Activated B cell treated with CpG ODN at 0.5 μM for 24 hours (primary cell): ENCODE measurements at regions of chr10 and their contacts with region 1.

Region 1: DNA sequence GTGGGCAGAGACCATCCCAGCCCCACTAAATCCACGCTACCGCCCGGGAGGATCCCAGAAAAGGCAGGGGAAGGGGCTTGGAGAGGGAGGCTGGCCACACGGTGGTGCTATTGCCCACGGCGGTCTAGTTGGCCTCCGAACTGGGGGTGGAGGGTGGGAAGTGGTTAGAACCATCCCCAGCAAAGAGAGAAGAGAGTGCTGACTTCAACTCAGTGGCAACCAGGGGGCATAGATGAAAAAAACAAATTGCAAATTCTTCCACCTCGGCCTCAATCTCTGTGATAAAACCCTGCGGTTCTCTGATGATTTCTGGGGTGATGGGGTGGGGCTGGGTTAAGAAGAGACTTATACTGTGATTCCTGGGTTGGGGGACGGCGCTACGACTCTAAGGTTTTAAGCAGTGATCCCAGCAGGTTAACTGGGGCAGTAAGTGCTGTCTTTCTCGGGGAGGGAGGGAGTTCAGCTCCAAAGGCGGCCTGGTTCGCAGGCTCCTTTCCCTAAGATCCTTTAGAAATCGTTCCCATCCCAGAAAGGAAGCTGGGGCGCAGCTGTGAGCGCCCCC is 154.5 kb upstream of the LYZL2 start:
- DNase-seq: peak; percentile 61
- ATAC-seq: peak; percentile 86
- H3K4me3 Mint-ChIP-seq: peak overlapping the region; percentile 81
- H3K27ac Mint-ChIP-seq: no peak overlapping the region
- H3K4me1 Mint-ChIP-seq: peaks cover 11% of the 10 kb centered on the region
- H3K27me3 Mint-ChIP-seq: peaks cover 14% of the 10 kb centered on the region
- CTCF ChIP-seq: peak; percentile 60

Region 2: GRCh38 chr10:30687698-30688219 is 96.3 kb before region 1 on chr10:
- CTCF ChIA-PET with region 1: interaction called, 9 read pairs
- POLR2A ChIA-PET with region 1: no interaction called
- intact Hi-C with region 1: loop called (anchors 1 kb)
- DNase-seq: peak; percentile 63
- ATAC-seq: peak; percentile 71
- H3K4me3 Mint-ChIP-seq: no peak overlapping the region
- H3K27ac Mint-ChIP-seq: no peak overlapping the region
- H3K4me1 Mint-ChIP-seq: peaks cover 5% of the 10 kb centered on the region
- H3K27me3 Mint-ChIP-seq: peaks cover 21% of the 10 kb centered on the region
- CTCF ChIP-seq: peak; percentile 93

Region 3: DNA sequence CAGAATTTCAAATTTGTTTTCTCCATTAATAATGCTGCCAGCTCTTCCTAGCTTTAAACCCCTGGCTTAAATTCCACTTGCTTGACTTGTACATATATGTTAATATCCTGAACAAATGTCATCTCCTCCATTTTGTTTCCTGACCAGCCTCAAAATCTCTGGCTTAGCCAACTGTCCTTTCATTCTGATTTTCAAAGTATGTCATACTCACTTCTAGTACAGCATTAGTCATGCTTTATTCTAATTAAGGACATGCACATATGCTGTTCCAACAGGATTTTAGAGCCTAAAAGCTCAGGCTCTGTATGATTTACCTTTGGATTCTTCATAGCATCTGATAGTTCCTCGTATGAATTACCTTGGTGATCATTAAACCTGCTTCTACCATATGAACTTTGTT is 89.4 kb after region 1 on chr10:
- CTCF ChIA-PET with region 1: no interaction called
- POLR2A ChIA-PET with region 1: no interaction called
- intact Hi-C with region 1: no loop called
- DNase-seq: no peak
- ATAC-seq: no peak
- H3K4me3 Mint-ChIP-seq: no peak overlapping the region
- H3K27ac Mint-ChIP-seq: no peak overlapping the region
- H3K4me1 Mint-ChIP-seq: no peaks in the 10 kb centered on the region
- H3K27me3 Mint-ChIP-seq: no peaks in the 10 kb centered on the region
- CTCF ChIP-seq: no peak

Region 4: GRCh38 chr10:31083765-31084184 is 299.8 kb after region 1 on chr10:
- CTCF ChIA-PET with region 1: interaction called, 3 read pairs
- POLR2A ChIA-PET with region 1: no interaction called
- intact Hi-C with region 1: loop called (anchors 2 kb)
- DNase-seq: no peak
- ATAC-seq: peak; percentile 64
- H3K4me3 Mint-ChIP-seq: no peak overlapping the region
- H3K27ac Mint-ChIP-seq: no peak overlapping the region
- H3K4me1 Mint-ChIP-seq: no peaks in the 10 kb centered on the region
- H3K27me3 Mint-ChIP-seq: peaks cover 5% of the 10 kb centered on the region
- CTCF ChIP-seq: no peak

Region 5: DNA sequence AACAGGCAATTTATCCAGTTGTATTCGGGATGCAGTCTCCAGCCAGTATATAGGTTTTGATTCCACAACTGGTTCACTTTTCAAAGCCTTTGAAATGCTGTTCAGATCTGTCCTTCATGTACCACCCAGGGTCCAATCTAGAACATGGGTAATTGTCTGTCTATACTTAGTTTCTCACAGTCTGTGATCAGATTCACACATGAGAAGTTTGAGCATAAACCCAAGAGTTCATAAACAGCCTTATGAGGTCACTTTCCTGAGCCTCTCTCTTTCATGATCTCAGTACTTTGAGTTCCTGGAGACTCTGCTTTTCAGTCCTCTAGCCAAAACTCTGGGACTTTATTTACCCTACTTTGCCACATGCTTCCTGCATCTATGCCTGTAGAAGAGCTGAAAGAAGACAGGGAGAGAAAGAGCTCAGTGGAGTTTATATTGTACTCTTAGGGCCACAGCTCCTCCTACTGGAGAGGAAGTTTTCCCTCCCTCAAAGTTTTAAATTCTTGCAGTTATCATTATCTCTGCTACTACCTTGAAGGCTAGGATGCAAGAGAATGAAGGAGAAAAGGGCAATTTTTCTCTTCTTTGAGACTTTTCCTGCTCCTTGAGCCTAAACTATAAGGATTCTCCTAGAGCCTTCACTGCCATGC is 707.0 kb after region 1 on chr10:
- CTCF ChIA-PET with region 1: interaction called, 34 read pairs
- POLR2A ChIA-PET with region 1: interaction called, 7 read pairs
- intact Hi-C with region 1: loop called (anchors 1 kb)
- DNase-seq: no peak
- ATAC-seq: peak; percentile 45
- H3K4me3 Mint-ChIP-seq: no peak overlapping the region
- H3K27ac Mint-ChIP-seq: no peak overlapping the region
- H3K4me1 Mint-ChIP-seq: no peaks in the 10 kb centered on the region
- H3K27me3 Mint-ChIP-seq: no peaks in the 10 kb centered on the region
- CTCF ChIP-seq: no peak

Region 6: DNA sequence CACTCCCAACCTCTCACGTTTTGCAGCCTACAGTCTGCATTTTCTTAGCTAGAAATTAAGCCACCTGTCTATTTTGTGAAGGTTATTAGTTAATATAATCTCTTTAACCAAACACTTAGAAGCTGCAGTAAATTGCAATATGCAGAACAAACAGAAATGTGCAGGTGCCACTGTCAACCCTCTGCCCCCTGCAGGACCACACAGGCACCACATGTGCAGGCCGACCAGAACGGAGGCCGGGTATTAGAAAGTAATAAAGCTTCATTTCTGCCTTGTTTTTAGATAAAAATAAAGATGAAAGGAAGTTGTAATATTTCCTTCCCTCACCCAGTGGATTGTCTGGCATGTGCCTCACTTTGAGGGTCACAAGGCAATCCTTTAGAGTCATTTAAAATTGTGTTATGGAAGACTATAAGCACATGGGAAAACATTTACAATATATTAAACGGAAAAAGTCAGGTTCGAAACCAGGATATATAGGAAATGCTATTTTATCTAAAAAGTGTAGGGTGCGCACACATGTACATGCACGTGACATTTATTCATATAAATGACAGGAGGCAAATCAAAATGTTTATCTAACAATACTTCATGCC is 986.4 kb after region 1 on chr10:
- CTCF ChIA-PET with region 1: interaction called, 80 read pairs
- POLR2A ChIA-PET with region 1: interaction called, 3 read pairs
- intact Hi-C with region 1: loop called (anchors 1 kb)
- DNase-seq: no peak
- ATAC-seq: peak; percentile 96
- H3K4me3 Mint-ChIP-seq: no peak overlapping the region
- H3K27ac Mint-ChIP-seq: no peak overlapping the region
- H3K4me1 Mint-ChIP-seq: no peaks in the 10 kb centered on the region
- H3K27me3 Mint-ChIP-seq: no peaks in the 10 kb centered on the region
- CTCF ChIP-seq: peak; percentile 53

Region 7: DNA sequence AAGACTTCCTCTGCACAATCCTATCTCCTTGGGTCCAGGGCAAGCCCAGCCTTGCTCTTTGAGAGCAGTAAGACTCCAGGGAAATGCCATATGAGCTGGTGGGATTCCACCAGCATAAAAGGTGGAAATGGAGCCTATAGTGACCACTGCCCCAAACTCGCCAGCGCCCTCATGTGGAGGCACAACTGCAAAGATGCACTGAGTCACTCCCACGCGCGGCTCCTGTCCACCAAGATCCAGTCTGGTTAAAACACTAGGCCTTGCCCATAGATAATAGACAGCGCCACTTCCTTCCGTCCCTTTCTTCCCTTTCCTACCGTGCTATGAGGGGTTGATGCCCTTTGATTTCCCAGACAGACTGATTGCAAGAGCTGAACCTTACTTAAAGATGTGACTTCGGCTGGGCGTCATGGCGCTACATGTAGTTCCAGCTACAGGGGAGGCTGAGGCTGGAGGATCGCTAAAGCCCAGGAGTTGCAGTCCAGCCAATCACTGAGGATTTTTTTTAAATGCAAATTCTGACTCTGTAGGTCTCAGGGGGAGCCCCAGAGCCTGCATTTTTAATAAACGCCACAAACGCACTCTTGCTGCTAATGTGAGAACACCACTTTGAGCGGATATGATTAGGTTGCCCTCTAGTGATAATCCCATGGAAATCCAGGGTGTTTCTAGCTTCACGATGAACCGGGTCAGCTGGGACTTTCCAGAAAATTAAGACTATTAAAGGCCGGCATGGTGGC is 1426.5 kb after region 1 on chr10:
- CTCF ChIA-PET with region 1: no interaction called
- POLR2A ChIA-PET with region 1: no interaction called
- intact Hi-C with region 1: loop called (anchors 10 kb)
- DNase-seq: no peak
- ATAC-seq: no peak
- H3K4me3 Mint-ChIP-seq: no peak overlapping the region
- H3K27ac Mint-ChIP-seq: no peak overlapping the region
- H3K4me1 Mint-ChIP-seq: no peaks in the 10 kb centered on the region
- H3K27me3 Mint-ChIP-seq: peaks cover 7% of the 10 kb centered on the region
- CTCF ChIP-seq: no peak